Naive thymus-derived CD8-positive, alpha-beta T cell (primary cell): ENCODE measurements at regions of chr9 and their contacts with region 1.

Region 1: GRCh38 chr9:6757456-6758247 is at the start of gene KDM4C:
- DNase-seq: peak; percentile 93 to 98 (median 96)
- ATAC-seq: peak; percentile 77 to 78
- H3K4me3 Mint-ChIP-seq: peak within 1 kb of the TSS; percentile 90 to 99 (median 96)
- H3K27ac Mint-ChIP-seq: peak within 1 kb of the TSS; percentile 99 to 100 (median 99)
- H3K4me1 Mint-ChIP-seq: peaks cover 9 to 35% (median 30%) of the 10 kb centered on the region in 4 donors
- H3K27me3 Mint-ChIP-seq: peaks cover 0 to 2% (median 0%) of the 10 kb centered on the region in 5 donors
- polyA plus RNA-seq, gene KDM4C: 27.5 to 27.8 (median 27.6) TPM

Region 2: GRCh38 chr9:6008169-6008979 is 749.3 kb before region 1 on chr9:
- POLR2A ChIA-PET with region 1: interaction called, 26 read pairs
- DNase-seq: peak; percentile 80 to 99 (median 94)
- ATAC-seq: peak; percentile 71 to 72
- H3K4me3 Mint-ChIP-seq: peak overlapping the region; percentile 75 to 95 (median 85)
- H3K27ac Mint-ChIP-seq: peak overlapping the region; percentile 85 to 98 (median 92)
- H3K4me1 Mint-ChIP-seq: peaks cover 19 to 66% (median 51%) of the 10 kb centered on the region in 4 donors
- H3K27me3 Mint-ChIP-seq: no peaks in the 10 kb centered on the region

Region 3: DNA sequence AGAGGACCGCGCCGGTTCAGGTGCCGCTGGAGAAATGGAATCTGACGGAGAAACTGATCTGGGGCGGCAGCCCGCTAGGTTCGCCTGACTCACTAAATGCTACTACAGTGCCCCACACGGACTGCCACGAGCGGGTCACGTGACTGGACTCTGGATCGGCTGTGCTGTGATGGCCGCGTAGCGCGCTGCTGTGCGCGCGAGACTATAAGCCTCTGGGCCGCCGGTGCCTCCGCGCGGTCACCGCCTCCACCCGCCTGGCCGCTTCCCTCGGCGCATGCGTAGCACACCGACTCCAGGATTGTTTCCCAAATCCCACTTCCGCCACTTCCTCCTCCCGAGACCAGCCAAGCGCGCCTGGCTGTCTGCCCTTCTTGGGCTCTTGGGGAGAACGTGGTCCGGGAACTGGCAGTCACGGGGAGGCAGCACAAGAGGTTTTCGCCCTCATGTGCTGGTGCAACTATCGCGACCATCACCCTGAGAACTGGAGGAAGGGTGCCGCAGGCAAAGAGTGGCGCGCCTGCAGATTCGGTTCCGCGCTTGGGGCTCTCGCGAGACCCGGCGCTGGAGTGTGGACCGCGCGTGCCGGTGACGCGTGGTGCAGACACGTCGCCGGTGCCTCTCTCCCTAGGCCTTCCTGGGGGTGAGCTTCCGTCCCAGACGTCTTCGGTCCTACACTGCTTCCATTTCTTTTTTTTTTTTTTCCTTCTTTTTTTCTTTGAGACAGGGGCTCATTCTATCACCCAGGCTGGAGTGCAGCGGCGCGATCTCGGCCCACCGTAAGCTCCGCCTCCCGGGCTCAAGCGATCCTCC is 76.3 kb before region 1 on chr9:
- POLR2A ChIA-PET with region 1: interaction called, 135 read pairs
- DNase-seq: peak; percentile 82 to 96 (median 90)
- ATAC-seq: peak; percentile 88 to 89
- H3K4me3 Mint-ChIP-seq: peak overlapping the region; percentile 93 to 98 (median 94)
- H3K27ac Mint-ChIP-seq: peak overlapping the region; percentile 98 to 100 (median 99)
- H3K4me1 Mint-ChIP-seq: peaks cover 8 to 34% (median 19%) of the 10 kb centered on the region in 4 donors
- H3K27me3 Mint-ChIP-seq: no peaks in the 10 kb centered on the region

Region 4: GRCh38 chr9:6703898-6704639 is 53.6 kb before region 1 on chr9:
- POLR2A ChIA-PET with region 1: interaction called, 113 read pairs
- DNase-seq: peak; percentile 64 to 94 (median 80)
- ATAC-seq: peak; percentile 88 to 93
- H3K4me3 Mint-ChIP-seq: peak overlapping the region; percentile 90 to 97 (median 93)
- H3K27ac Mint-ChIP-seq: peak overlapping the region; percentile 93 to 99 (median 96)
- H3K4me1 Mint-ChIP-seq: peaks cover 6 to 21% (median 12%) of the 10 kb centered on the region in 4 donors
- H3K27me3 Mint-ChIP-seq: no peaks in the 10 kb centered on the region

Region 5: DNA sequence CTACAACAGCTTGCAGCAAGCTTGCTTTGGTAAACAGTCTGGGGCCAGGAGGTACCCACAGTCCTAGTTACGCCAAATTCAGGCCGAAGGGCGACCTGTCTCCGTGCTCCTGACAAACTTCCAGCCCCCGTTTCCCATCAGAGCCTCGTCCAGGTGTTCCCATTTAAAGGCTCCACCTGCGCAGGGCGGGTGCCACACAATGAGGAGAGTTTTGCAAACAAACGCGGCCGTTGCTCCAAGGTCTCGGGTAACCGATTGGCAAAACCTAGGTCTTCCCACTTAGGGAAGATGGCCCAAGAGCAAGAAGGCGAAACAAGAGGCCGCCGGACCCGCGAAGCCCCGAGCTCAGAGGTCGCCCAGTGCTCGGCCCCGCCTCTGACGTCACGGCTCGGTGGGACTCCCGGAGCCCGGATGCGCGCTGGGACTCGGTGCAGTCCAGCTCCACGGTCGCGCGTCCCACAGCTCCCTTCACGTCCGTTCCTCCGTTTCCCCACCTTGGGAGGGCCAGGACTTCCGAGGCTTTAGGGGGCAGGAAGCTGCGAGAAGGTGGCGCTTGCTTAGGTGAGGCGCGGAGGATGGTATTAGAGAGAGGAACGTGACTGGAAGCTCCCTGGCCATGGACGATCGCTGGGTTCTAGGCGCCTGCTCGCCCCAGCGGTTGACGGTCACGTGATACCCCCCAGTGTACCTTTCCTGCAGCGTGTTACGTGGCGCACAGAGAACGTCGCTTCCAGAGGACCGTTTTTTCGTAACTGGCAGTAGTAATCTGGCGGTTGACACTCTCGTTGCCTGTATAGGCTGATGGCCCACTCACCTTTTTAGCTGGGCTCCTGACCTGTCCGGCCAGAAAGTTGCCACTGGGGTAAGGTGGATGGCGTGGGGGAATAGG is 41.7 kb before region 1 on chr9:
- POLR2A ChIA-PET with region 1: interaction called, 90 read pairs
- DNase-seq: peak; percentile 31 to 87 (median 53)
- ATAC-seq: peak; percentile 92
- H3K4me3 Mint-ChIP-seq: peak overlapping the region; percentile 83 to 93 (median 87)
- H3K27ac Mint-ChIP-seq: peak overlapping the region; percentile 85 to 94 (median 91)
- H3K4me1 Mint-ChIP-seq: peaks cover 5 to 11% (median 8%) of the 10 kb centered on the region in 4 donors
- H3K27me3 Mint-ChIP-seq: no peaks in the 10 kb centered on the region

Region 6: DNA sequence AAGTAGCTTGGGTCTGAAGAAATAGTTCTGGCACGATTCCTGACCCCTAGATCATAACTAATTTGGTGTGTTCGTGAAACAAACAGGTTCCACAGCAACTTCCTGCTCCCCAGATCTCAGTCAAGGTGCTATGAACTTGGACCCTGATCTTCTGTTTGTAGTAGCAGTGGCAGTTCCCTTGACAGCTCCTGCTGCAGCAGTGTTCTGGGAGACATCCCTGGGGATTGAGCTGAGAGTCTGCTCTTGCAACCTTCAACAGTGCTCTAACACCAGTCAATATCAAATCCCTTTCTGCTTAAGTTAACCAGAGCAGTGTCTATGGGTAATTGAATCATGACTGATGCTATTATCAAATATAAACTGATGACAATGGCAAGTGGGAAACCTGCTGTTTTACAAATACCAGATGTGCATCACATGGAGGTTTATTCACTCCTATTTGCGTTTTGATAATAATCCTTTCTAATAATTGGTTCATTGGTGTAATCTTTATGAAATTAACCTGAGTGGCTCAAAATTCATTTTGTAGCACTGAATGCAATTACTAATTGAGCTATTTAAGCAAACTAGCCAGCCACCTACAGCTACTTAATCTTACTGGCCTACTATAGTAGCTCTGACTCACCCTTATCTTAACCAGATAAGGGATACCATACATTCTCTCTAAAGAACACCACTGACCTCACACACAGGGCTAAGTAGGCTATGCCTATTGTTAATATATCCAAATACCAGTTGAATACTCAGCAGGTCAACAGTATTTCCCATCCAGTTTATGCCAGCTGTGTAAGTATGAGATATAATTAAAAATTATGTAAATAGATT is 22.0 kb after region 1 on chr9:
- POLR2A ChIA-PET with region 1: interaction called, 23 read pairs
- DNase-seq: no peak
- ATAC-seq: no peak
- H3K4me3 Mint-ChIP-seq: peak overlapping the region in 7 of 10 donors; percentile 5 to 54 (median 36)
- H3K27ac Mint-ChIP-seq: peak overlapping the region in 6 of 10 donors; percentile 25 to 71 (median 46)
- H3K4me1 Mint-ChIP-seq: peaks cover 37 to 88% (median 82%) of the 10 kb centered on the region in 4 donors
- H3K27me3 Mint-ChIP-seq: no peaks in the 10 kb centered on the region